GM12878 (cell line): ENCODE measurements at regions of chr10 and their contacts with region 1.

Region 1: GRCh38 chr10:49592726-49593563 is 17.2 kb upstream of the SLC18A3 start:
- DNase-seq: peak; percentile 5
- ATAC-seq: peak; percentile 93
- H3K4me3 ChIP-seq: no peak overlapping the region
- H3K27ac ChIP-seq: no peak overlapping the region
- H3K4me1 ChIP-seq: no peaks in the 10 kb centered on the region
- H3K27me3 ChIP-seq: no peaks in the 10 kb centered on the region
- CTCF ChIP-seq: peak; percentile 91 to 98 (median 97)
- EP300 ChIP-seq: no peak
- POLR2A ChIP-seq: no peak
- RAD21 ChIP-seq: peak; percentile 62

Region 2: DNA sequence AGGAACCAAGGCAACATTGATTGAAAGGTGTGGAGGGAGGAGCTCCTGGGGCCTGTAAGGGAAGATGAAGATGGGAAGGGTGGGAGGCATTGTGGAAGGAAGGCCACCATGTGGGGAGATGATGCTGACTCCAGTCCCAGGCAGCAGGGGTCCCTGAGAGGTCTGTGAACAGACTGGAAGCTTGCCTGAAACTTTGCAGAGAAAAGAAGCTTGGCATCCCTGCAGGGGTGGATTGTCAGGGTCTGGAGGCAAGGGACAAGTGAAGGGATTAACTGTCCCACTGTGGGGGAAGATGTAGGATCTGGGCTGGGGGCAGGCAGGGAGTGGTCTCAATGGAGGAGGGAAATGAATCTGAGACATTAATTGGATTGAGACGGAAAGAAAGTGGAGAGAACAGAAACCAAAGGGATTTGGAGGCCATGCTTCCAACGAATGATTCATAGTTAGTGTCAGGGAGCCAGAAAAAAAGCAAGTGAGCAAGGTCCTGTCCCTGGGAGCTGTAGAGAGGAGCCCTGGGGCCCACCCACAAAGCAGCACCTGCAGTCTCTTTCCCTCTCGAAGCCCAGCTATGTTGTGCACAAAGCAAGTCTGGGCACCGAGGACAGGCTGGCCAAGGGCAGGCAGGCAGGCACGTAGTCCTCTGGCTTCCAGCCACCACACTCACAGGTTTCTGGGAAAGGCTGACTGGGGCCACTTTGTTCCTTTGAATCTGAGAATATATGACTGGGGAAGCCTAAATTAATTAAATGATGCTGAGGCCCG is 12.4 kb after region 1 on chr10:
- CTCF ChIA-PET with region 1: interaction called, 10 read pairs
- POLR2A ChIA-PET with region 1: no interaction called
- RAD21 ChIA-PET with region 1: interaction called, 3 read pairs
- SMC1A ChIA-PET with region 1: no interaction called
- in situ Hi-C with region 1: no loop called
- intact Hi-C with region 1: no loop called
- DNase-seq: no peak
- ATAC-seq: no peak
- H3K4me3 ChIP-seq: no peak overlapping the region
- H3K27ac ChIP-seq: no peak overlapping the region
- H3K4me1 ChIP-seq: no peaks in the 10 kb centered on the region
- H3K27me3 ChIP-seq: peaks cover 2 to 7% of the 10 kb centered on the region in 2 experiments
- CTCF ChIP-seq: no peak
- EP300 ChIP-seq: no peak
- POLR2A ChIP-seq: no peak
- RAD21 ChIP-seq: no peak

Region 3: DNA sequence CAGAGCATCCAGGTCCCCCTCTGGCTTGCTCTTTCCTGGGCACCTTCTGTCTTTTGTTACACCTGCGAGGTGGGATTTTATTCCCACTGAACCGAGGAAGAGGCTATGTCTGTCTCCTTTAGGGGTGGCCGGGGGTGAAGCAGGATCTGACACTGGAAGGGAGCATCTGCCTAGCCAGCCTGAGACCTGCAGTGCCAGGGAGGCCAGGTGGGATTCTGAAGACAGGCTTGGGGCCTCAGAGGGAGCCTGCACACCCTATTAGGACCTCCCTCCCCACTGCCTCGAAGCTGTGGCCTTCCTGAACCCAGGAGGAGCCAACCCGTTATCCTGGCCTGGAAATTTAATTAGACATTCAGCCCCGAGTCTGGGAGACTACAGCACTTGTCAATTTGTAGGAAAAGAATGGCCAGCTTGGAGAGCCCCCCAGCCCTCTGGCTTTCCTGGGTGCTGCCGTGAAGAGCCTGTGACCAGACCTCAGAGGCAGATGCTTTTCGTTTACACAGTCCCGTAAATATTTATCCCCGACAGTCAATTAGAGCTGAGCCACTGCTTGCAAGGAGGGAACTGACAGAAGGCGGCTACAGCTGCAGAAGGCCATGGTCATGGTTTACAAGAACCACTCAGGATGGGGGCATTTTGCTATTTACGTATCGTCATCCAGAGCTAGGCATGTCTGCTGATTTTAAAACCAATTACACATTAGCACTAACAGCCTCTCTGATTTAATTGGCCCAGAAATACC is 40.6 kb after region 1 on chr10:
- CTCF ChIA-PET with region 1: no interaction called
- POLR2A ChIA-PET with region 1: no interaction called
- RAD21 ChIA-PET with region 1: no interaction called
- SMC1A ChIA-PET with region 1: no interaction called
- in situ Hi-C with region 1: no loop called
- intact Hi-C with region 1: no loop called
- DNase-seq: no peak
- ATAC-seq: no peak
- H3K4me3 ChIP-seq: no peak overlapping the region
- H3K27ac ChIP-seq: no peak overlapping the region
- H3K4me1 ChIP-seq: no peaks in the 10 kb centered on the region
- H3K27me3 ChIP-seq: peaks cover 0 to 2% of the 10 kb centered on the region in 2 experiments; a peak in 1 of 4 replicates
- CTCF ChIP-seq: no peak
- EP300 ChIP-seq: no peak
- POLR2A ChIP-seq: no peak
- RAD21 ChIP-seq: no peak

Region 4: GRCh38 chr10:50224330-50224952 is 631.5 kb after region 1 on chr10:
- CTCF ChIA-PET with region 1: interaction called, 61 read pairs
- POLR2A ChIA-PET with region 1: no interaction called
- RAD21 ChIA-PET with region 1: interaction called, 16 read pairs
- SMC1A ChIA-PET with region 1: interaction called, 27 read pairs
- in situ Hi-C with region 1: loop called (anchors 5 kb)
- intact Hi-C with region 1: loop called (anchors 1 kb)
- DNase-seq: peak; percentile 36
- ATAC-seq: peak; percentile 99
- H3K4me3 ChIP-seq: no peak overlapping the region
- H3K27ac ChIP-seq: no peak overlapping the region
- H3K4me1 ChIP-seq: no peaks in the 10 kb centered on the region
- H3K27me3 ChIP-seq: no peaks in the 10 kb centered on the region
- CTCF ChIP-seq: peak; percentile 65 to 87 (median 67); a peak in 5 of 6 replicates
- EP300 ChIP-seq: no peak
- POLR2A ChIP-seq: no peak
- RAD21 ChIP-seq: peak; percentile 81